ENCODE measurements at regions of chr22 and their contacts with region 1.

Region 1: GRCh38 chr22:31173386-31174145 is 13.6 kb downstream of the RNF185 start:
- DNase-seq: no peak
- H3K4me3 Mint-ChIP-seq: peak overlapping the region; percentile 23
- H3K27ac Mint-ChIP-seq: peak overlapping the region; percentile 84
- H3K4me1 Mint-ChIP-seq: peaks cover 47% of the 10 kb centered on the region
- H3K27me3 Mint-ChIP-seq: no peaks in the 10 kb centered on the region

Region 2: DNA sequence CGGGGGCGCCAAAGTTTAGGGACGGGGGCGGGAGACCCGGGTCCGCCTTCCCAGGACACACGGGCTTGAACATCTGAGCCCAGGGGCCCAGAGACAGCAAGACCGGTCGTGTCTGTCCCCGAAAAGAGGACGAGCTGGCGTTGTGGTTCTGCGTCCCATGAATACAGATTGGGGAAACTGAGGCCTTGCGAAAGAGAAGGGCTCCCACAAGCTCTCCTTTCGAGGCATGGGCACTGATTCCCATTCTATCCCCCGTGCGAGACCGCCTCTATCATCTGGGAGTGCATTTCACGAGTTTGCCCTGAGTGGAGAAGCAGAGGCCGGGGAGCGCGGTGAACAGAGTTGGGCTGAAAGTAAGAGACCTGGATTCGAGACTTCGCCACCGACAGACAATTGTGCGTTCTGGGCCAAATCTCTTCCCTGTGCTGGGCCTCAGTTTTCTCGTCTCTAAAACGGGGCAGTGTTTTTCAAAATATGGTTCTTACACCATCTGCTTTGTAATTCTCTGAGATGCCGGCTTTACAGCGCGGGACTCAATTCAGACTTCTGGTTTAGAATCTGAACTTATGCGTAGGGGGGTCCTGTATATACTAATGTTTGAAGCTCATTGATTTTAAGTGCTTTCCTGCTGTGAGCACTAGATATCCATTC is 13.1 kb before region 1 on chr22:
- CTCF ChIA-PET with region 1: interaction called, 5 read pairs
- intact Hi-C with region 1: loop called (anchors 1 kb)
- DNase-seq: peak; percentile 28
- H3K4me3 Mint-ChIP-seq: peak overlapping the region; percentile 100
- H3K27ac Mint-ChIP-seq: peak overlapping the region; percentile 96
- H3K4me1 Mint-ChIP-seq: peaks cover 33% of the 10 kb centered on the region
- H3K27me3 Mint-ChIP-seq: no peaks in the 10 kb centered on the region

Region 3: GRCh38 chr22:31241936-31242335 is 68.4 kb after region 1 on chr22:
- CTCF ChIA-PET with region 1: no interaction called
- intact Hi-C with region 1: no loop called
- DNase-seq: no peak
- H3K4me3 Mint-ChIP-seq: no peak overlapping the region
- H3K27ac Mint-ChIP-seq: no peak overlapping the region
- H3K4me1 Mint-ChIP-seq: peaks cover 12% of the 10 kb centered on the region
- H3K27me3 Mint-ChIP-seq: no peaks in the 10 kb centered on the region

Region 4: DNA sequence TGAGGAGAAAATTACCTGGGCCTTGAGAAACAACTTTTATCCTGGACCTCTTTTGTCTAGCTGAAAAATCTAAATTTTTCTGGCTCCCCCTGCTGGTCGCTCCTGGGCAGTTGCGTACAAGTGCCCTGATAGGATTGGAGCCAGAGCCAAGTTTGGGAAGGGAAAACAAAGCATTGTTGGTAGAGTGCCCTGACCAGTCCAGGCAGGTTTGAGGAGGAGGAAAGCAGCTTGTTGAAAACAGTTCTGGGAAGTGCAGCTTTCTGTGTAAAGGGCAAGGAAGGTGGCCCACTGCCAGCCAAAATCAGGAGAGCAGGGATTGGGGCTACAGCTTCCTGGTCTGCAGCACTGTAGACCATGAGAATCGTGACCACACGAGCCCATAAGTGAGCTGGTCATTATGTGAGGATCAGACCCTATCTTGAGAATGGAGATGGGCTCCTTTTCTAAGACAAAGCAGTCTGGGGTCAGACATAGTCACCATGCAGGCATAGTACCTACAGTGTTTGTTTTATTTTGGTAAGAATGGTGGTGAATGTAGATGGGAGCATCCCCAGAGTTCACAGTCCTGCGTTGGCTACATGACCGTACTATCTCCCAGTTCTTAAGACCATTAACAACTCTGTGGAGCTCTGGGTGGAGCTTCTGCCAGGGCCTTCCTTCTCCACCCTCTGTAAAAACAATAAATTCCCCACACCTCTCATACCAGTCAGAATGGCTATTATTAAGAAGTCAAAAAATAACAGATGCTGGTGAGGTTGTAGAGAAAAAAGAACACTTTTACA is 140.0 kb after region 1 on chr22:
- CTCF ChIA-PET with region 1: no interaction called
- intact Hi-C with region 1: no loop called
- DNase-seq: peak; percentile 87
- H3K4me3 Mint-ChIP-seq: no peak overlapping the region
- H3K27ac Mint-ChIP-seq: peak overlapping the region; percentile 12
- H3K4me1 Mint-ChIP-seq: peaks cover 27% of the 10 kb centered on the region
- H3K27me3 Mint-ChIP-seq: no peaks in the 10 kb centered on the region

Region 5: DNA sequence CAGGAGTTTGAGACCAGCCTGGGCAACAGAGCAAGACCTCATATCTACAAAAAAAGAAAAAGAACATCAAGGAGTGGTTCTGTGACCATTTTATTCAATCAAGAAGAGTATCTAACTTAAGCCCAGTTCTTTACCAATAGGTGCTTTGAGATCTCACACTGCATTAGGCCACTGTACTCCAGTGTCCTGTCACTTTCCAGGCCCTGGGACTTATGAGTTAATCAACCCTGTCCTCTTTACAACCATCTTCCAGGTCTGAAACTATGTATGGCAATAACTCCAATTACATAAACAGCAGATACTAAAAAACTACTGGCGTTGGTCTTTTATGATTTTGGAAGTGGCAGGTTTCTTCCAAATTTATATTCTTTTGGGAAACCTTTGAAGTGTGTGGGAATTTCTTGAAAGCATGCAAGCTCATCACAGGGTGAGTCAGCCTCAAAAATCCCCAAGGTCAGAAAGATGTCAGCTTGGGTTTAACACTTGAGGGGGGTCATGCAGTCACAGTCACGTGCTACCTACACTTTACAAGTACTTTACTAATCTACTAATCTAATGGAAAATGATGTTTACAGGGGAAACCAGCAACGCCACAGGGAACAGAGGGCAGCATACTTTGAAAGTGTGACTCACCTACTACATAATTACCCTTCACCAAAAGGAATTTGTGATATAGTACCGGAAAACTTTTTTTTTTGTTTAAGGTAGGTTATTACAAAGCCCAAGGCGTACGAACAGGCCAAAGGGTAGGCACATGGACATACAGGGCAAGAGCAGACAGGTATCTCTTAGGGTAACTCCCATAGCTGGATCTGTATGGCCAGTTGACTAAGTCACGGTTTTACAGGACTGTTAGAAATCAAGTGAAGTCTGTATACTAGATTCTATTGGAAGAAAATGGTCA is 472.9 kb after region 1 on chr22:
- CTCF ChIA-PET with region 1: no interaction called
- intact Hi-C with region 1: loop called (anchors 10 kb)
- DNase-seq: peak; percentile 76
- H3K4me3 Mint-ChIP-seq: no peak overlapping the region
- H3K27ac Mint-ChIP-seq: peak overlapping the region; percentile 91
- H3K4me1 Mint-ChIP-seq: peaks cover 53% of the 10 kb centered on the region
- H3K27me3 Mint-ChIP-seq: no peaks in the 10 kb centered on the region

Measured in activated naive CD4-positive, alpha-beta T cell treated with anti-CD3 and anti-CD28 coated beads for 36 hours (primary cell).